ENCODE measurements at regions of chr15 and their contacts with region 1.

Region 1: GRCh38 chr15:81480645-81481053 is 106.6 kb upstream of the TMC3 start:
- DNase-seq: no peak
- ATAC-seq: peak; percentile 52 to 75
- H3K4me3 ChIP-seq: no peak overlapping the region
- H3K27ac ChIP-seq: no peak overlapping the region
- H3K4me1 ChIP-seq: no peaks in the 10 kb centered on the region
- H3K27me3 ChIP-seq: no peaks in the 10 kb centered on the region
- CTCF ChIP-seq: peak; percentile 69 to 85 (median 82)
- POLR2A ChIP-seq: no peak

Region 2: GRCh38 chr15:82139823-82140268 is 659.2 kb after region 1 on chr15:
- in situ Hi-C with region 1: no loop called
- intact Hi-C with region 1: loop called (anchors 2 kb)
- DNase-seq: no peak
- ATAC-seq: no peak
- H3K4me3 ChIP-seq: no peak overlapping the region
- H3K27ac ChIP-seq: no peak overlapping the region
- H3K4me1 ChIP-seq: no peaks in the 10 kb centered on the region
- H3K27me3 ChIP-seq: no peaks in the 10 kb centered on the region
- CTCF ChIP-seq: peak; percentile 38 to 70 (median 63)
- POLR2A ChIP-seq: no peak